Esophagus squamous epithelium (tissue), 5 donors: ENCODE measurements at regions of chr17 and their contacts with region 1.

Region 1: GRCh38 chr17:17675925-17676534 is 5.2 kb upstream of the RAI1 start:
- DNase-seq: no peak
- H3K4me3 ChIP-seq: no peak overlapping the region
- H3K27ac ChIP-seq: no peak overlapping the region
- H3K4me1 ChIP-seq: peaks cover 0 to 18% (median 0%) of the 10 kb centered on the region in 3 donors
- H3K27me3 ChIP-seq: peaks cover 0 to 15% (median 0%) of the 10 kb centered on the region in 4 donors
- CTCF ChIP-seq: no peak
- POLR2A ChIP-seq: no peak

Region 2: GRCh38 chr17:17859909-17860765 is 184.1 kb after region 1 on chr17:
- intact Hi-C with region 1: loop called (anchors 10 kb)
- DNase-seq: no peak
- H3K4me3 ChIP-seq: no peak overlapping the region
- H3K27ac ChIP-seq: no peak overlapping the region
- H3K4me1 ChIP-seq: peaks cover 5 to 28% (median 13%) of the 10 kb centered on the region in 3 donors
- H3K27me3 ChIP-seq: no peaks in the 10 kb centered on the region
- CTCF ChIP-seq: peak; percentile 92 to 96 (median 94)
- POLR2A ChIP-seq: no peak

Region 3: GRCh38 chr17:18033442-18034099 is 357.5 kb after region 1 on chr17:
- intact Hi-C with region 1: loop called (anchors 5 kb)
- DNase-seq: no peak
- H3K4me3 ChIP-seq: no peak overlapping the region
- H3K27ac ChIP-seq: peak overlapping the region in 1 of 4 donors; percentile 25
- H3K4me1 ChIP-seq: peaks cover 6 to 39% (median 16%) of the 10 kb centered on the region in 3 donors
- H3K27me3 ChIP-seq: no peaks in the 10 kb centered on the region
- CTCF ChIP-seq: peak in 5 of 6 experiments; percentile 52 to 84 (median 75)
- POLR2A ChIP-seq: no peak